ENCODE measurements at regions of chr11 and their contacts with region 1.

Region 1: DNA sequence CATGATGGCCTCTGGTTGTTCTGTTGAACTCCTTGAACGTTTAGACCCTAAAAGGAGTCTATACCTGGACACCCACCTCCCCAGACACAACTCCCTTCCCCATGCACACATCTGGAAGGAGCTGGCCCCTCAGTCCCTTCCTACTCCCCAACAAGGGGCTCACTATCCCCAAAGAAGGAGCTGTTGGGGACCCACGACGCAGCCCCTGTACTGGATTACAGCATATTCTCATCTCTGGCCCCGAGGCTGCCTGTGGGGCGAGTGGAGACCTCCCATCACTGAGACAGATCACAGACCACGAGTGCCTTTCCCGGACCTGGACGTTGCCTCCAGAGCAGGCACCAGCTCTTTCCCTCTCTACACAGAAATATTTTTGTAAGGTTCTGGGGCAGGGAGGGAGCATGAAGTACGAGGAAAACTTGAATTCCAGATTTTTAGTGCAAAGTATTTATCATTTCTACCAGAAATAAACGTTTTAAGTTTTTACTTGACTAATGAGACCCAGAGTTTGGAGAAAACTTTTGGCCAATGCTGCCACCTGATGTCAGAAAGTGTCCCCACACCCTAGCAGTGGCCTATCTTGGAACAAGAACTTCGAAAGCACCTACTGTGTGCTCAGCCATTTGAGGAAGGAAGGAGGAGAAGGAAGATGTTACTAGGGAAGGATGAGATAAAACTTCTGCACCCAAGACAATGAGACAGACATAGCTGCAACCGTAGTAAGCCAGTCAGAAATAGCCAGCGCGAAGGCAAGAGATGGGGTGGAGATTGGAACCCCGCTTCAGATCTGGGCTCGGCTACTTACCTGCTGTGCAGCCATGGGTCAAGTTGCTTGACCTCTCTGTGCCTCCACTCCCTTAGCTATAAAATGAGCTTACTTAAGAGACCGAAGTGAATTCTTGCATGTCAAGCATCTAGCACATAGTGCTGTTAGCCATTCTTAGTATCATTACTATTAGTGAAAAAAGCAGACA is 10.2 kb upstream of the POU2F3 start:
- DNase-seq: peak; percentile 40 to 64 (median 52)
- ATAC-seq: peak; percentile 73
- H3K4me3 ChIP-seq: no peak overlapping the region
- H3K27ac ChIP-seq: no peak overlapping the region
- H3K4me1 ChIP-seq: peaks cover 0 to 7% of the 10 kb centered on the region in 2 experiments; a peak in 1 of 5 replicates
- H3K27me3 ChIP-seq: peaks cover 8 to 37% of the 10 kb centered on the region in 2 experiments; a peak in 4 of 5 replicates
- CTCF ChIP-seq: peak; percentile 66 to 73 (median 70)
- EP300 ChIP-seq: no peak
- POLR2A ChIP-seq: no peak
- RAD21 ChIP-seq: peak; percentile 64 to 78

Region 2: GRCh38 chr11:120172054-120172911 is 57.5 kb before region 1 on chr11:
- CTCF ChIA-PET with region 1: interaction called, 44 read pairs
- POLR2A ChIA-PET with region 1: no interaction called
- in situ Hi-C with region 1: loop called (anchors 5 kb)
- intact Hi-C with region 1: loop called (anchors 1 kb)
- DNase-seq: peak; percentile 61 to 78 (median 72)
- ATAC-seq: peak; percentile 80
- H3K4me3 ChIP-seq: no peak overlapping the region
- H3K27ac ChIP-seq: no peak overlapping the region
- H3K4me1 ChIP-seq: peaks cover 0 to 18% of the 10 kb centered on the region in 2 experiments; a peak in 2 of 5 replicates
- H3K27me3 ChIP-seq: peaks cover 28 to 71% of the 10 kb centered on the region in 2 experiments; a peak in 4 of 5 replicates
- CTCF ChIP-seq: peak; percentile 87 to 89 (median 87)
- EP300 ChIP-seq: no peak
- POLR2A ChIP-seq: no peak
- RAD21 ChIP-seq: peak; percentile 88 to 94

Region 3: GRCh38 chr11:120261931-120262330 is 32.2 kb after region 1 on chr11:
- CTCF ChIA-PET with region 1: no interaction called
- POLR2A ChIA-PET with region 1: no interaction called
- in situ Hi-C with region 1: no loop called
- intact Hi-C with region 1: no loop called
- DNase-seq: no peak
- ATAC-seq: no peak
- H3K4me3 ChIP-seq: no peak overlapping the region
- H3K27ac ChIP-seq: no peak overlapping the region
- H3K4me1 ChIP-seq: no peaks in the 10 kb centered on the region
- H3K27me3 ChIP-seq: peaks cover 46 to 75% of the 10 kb centered on the region in 2 experiments
- CTCF ChIP-seq: no peak
- EP300 ChIP-seq: no peak
- POLR2A ChIP-seq: no peak
- RAD21 ChIP-seq: no peak

Measured in K562 (cell line).